ENCODE measurements at regions of chr11 and their contacts with region 1.

Region 1: DNA sequence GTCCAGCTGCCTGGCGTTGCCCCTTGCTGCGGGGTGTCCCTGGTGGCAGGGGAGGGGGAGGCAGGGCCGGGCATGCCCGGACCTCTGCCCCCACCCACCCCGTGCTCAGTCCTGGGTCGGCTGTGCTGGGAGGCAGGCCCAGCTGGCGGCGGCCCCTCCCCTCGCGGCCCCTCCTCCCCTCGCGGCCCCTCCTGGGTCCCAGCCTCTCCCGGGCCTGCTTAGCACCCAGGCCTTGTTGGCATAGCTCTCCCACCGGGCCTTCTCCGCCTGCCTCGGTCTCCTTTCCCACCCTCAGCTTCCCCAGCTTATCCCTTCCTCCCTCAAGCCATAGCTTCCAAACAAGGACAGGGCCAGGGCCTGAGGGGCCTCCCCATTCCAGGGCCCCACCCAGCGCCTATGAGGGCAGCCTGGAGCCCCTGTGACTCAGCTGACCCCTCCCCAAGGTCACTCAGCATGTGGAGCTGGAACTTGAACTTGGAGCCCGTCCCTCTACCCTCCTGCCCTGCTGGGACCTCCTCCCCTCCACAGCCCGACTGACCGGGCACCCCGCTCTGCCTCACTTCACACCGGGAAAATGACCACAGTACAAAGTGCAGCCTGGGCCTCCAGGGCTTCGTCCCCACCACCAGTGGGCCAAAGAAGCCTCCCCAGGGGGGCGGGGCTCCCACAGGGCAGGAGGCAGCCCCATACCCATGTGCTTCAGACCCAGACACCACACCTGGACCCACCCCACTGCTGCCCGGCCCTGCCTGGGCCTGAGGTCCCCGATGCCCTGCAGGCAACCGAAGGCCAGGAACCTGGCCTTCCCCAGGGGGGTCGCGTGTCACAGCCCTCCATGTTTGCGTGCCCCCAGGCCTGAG is 1.2 kb downstream of the EPS8L2 start:
- DNase-seq: peak; percentile 50 to 65 (median 61)
- H3K4me3 ChIP-seq: peak overlapping the region; percentile 70
- H3K27ac ChIP-seq: peak overlapping the region; percentile 31 to 61
- H3K4me1 ChIP-seq: peaks cover 34% of the 10 kb centered on the region
- H3K27me3 ChIP-seq: no peaks in the 10 kb centered on the region
- CTCF ChIP-seq: no peak
- EP300 ChIP-seq: no peak
- POLR2A ChIP-seq: no peak

Region 2: DNA sequence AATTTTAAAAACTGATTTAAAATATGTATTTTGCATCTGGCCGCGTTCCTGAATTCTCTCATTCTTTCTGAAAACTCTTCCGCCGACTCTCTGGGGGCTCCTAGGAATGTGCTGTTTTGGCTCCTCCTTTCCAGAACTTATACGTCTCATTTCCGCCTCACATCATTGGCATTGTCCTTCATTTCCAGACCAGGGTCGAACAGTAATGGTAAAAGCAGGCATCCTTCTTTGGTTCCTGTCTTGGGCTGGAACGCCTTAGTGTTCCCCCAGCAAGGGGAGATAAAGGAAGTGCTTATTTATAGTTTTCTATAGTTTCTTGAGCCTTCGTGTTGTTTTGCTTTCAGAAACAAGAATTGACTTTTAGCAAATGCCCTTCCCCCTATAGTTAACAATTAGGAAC is 1201.4 kb after region 1 on chr11:
- intact Hi-C with region 1: loop called in 1 of 4 experiments (anchors 5 kb)
- DNase-seq: peak in 1 of 5 donors; percentile 6
- H3K4me3 ChIP-seq: no peak overlapping the region
- H3K27ac ChIP-seq: no peak overlapping the region
- H3K4me1 ChIP-seq: peaks cover 11% of the 10 kb centered on the region
- H3K27me3 ChIP-seq: no peaks in the 10 kb centered on the region
- CTCF ChIP-seq: no peak
- EP300 ChIP-seq: no peak
- POLR2A ChIP-seq: no peak

Measured in ovary (tissue), 10 donors.